Ovary (tissue), 10 donors: ENCODE measurements at regions of chr20 and their contacts with region 1.

Region 1: GRCh38 chr20:32357869-32358631 is at the start of gene ASXL1:
- DNase-seq: peak; percentile 97 to 99 (median 99)
- H3K4me3 ChIP-seq: peak within 1 kb of the TSS; percentile 87
- H3K27ac ChIP-seq: peak within 1 kb of the TSS; percentile 87 to 96
- H3K4me1 ChIP-seq: peaks cover 9% of the 10 kb centered on the region
- H3K27me3 ChIP-seq: no peaks in the 10 kb centered on the region
- CTCF ChIP-seq: peak in 1 of 3 donors; percentile 29
- EP300 ChIP-seq: peak; percentile 82
- POLR2A ChIP-seq: peak; percentile 75
- total RNA-seq, gene ASXL1: 52.6 to 85.1 (median 71.2) TPM

Region 2: DNA sequence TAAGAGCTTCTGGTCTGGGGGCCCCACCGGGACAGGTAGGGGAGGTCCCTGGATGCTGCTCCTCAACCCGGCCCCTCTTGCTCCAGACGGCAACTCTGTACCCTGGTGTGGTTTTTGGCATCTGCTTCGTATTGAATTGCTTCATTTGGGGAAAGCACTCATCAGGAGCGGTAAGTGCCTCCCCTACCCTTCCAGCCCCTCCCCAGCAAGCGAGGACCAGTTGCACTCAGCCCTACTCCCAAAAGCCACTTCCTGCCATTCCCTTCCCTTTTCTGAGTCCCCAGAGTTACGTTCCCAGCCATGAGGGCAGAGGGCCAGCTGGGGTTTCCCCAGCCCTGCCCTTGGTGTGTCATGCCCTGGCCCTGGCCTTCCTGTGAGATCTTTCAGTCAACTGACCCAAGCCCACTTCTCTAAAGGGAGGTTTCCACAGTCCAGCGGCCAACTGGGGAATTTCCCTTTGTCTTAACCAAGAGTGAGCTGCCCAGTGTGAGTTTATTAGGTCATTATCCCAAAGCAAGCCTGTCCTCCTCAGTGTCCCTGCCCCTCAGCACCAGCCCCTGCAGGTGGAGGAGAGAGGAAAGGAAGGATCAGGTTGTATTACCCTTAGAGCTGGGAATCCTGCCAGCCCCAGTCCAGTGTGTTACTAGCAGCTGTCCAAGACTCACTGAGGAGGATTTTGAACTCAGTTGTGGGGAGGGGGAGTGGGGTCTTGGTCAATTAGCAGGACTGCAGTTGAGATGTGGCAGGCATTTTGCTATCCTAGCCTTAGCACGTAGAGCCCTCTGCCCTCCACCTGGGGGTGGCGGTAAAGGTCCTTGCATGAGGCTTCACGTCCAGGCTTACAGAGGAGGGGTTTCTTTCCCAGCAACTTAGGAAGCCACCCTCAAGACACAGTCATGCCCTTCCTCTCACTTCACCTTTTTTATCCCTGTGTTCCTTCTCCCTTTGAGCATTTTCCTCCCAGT is 202.8 kb before region 1 on chr20:
- intact Hi-C with region 1: no loop called
- DNase-seq: peak; percentile 47 to 70 (median 51)
- H3K4me3 ChIP-seq: no peak overlapping the region
- H3K27ac ChIP-seq: no peak overlapping the region
- H3K4me1 ChIP-seq: no peaks in the 10 kb centered on the region
- H3K27me3 ChIP-seq: no peaks in the 10 kb centered on the region
- CTCF ChIP-seq: no peak
- EP300 ChIP-seq: no peak
- POLR2A ChIP-seq: no peak

Region 3: GRCh38 chr20:32302507-32302872 is 55.6 kb before region 1 on chr20:
- intact Hi-C with region 1: no loop called
- DNase-seq: no peak
- H3K4me3 ChIP-seq: no peak overlapping the region
- H3K27ac ChIP-seq: no peak overlapping the region
- H3K4me1 ChIP-seq: no peaks in the 10 kb centered on the region
- H3K27me3 ChIP-seq: no peaks in the 10 kb centered on the region
- CTCF ChIP-seq: no peak
- EP300 ChIP-seq: no peak
- POLR2A ChIP-seq: no peak

Region 4: DNA sequence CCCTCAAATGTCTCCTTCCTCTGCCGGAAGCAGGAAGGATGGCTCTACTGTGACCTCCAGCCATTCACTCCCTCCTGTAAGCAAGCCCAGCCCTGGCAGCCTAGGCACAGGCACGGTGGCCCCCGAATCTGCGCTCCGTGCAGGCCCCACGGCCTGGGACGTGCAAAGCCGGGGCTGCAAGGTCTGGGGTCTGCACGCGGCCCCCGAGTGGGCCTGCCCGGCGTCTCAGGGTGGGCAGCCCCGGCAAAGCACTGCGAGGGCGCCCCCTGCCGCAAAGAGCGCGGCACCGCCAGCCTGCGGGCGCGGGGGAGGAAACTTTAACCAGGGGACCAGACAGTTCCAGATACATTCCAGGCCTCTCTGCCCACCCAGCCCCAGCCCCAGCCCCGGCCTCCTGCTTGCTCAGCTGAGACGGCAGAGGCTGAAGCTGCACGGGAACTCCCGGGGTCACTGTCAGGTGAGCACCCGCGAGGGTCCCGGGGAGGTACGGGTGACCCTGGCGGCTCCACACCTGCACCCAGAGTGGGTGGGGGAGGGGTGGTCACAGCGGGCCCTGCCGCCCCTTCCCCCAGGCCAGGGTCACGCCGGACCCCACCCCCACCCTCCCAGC is 98.9 kb after region 1 on chr20:
- intact Hi-C with region 1: loop called in 1 of 4 experiments (anchors 5 kb)
- DNase-seq: peak; percentile 62 to 85 (median 73)
- H3K4me3 ChIP-seq: peak overlapping the region; percentile 38
- H3K27ac ChIP-seq: no peak overlapping the region
- H3K4me1 ChIP-seq: peaks cover 10% of the 10 kb centered on the region
- H3K27me3 ChIP-seq: no peaks in the 10 kb centered on the region
- CTCF ChIP-seq: peak; percentile 73 to 86 (median 80)
- EP300 ChIP-seq: no peak
- POLR2A ChIP-seq: no peak

Region 5: DNA sequence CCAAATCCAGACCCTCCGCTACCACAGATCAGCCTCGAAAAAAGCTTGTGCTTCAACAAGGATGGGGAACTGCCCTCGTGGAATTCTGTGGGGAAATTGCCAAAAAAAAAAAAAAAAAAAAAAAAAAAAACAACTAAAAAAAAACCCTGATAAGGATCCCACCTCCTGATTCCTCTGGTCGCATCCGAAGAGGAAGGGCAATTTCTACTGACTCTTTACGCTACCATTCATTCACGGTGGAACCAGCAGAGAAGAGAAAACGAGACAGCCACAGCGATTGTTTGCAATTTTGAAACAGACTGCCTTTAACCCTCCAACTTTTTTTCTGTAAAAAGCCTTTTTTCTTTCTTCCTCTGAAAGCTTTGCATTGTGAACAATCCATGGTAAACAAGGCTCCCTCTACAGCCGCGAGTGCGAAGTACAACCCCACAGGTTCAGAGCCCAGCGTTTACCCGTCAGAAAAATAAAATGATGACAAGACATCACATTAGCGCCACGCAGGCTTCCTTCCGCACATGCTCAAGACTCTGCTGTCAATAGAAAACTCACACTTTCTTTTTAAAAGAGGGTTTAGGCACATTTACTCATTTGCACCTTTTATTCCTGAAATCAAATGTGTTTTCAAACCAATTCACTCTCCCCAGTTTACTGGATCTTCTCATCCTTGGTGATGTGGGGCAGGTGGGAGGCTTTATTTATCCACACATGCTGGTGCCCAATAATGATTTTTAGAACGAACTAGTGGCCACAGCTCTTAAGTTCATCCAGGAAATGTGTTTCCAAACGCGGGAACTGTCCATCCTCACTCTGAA is 127.1 kb after region 1 on chr20:
- intact Hi-C with region 1: loop called in 1 of 4 experiments (anchors 5 kb)
- DNase-seq: peak; percentile 65 to 84 (median 79)
- H3K4me3 ChIP-seq: peak overlapping the region; percentile 92
- H3K27ac ChIP-seq: peak overlapping the region in 1 of 2 donors; percentile 60
- H3K4me1 ChIP-seq: no peaks in the 10 kb centered on the region
- H3K27me3 ChIP-seq: no peaks in the 10 kb centered on the region
- CTCF ChIP-seq: peak; percentile 41 to 81 (median 68)
- EP300 ChIP-seq: no peak
- POLR2A ChIP-seq: no peak